ENCODE measurements at regions of chr1 and their contacts with region 1.

Region 1: GRCh38 chr1:93629099-93630059 is 52.3 kb downstream of the BCAR3 start:
- DNase-seq: peak; percentile 59
- H3K4me3 ChIP-seq: no peak overlapping the region
- H3K27ac ChIP-seq: peak overlapping the region; percentile 35
- H3K4me1 ChIP-seq: peaks cover 65% of the 10 kb centered on the region
- H3K27me3 ChIP-seq: no peaks in the 10 kb centered on the region
- CTCF ChIP-seq: peak; percentile 74 to 78

Region 2: GRCh38 chr1:93585059-93585966 is 44.1 kb before region 1 on chr1:
- CTCF ChIA-PET with region 1: interaction called, 3 read pairs
- dilution Hi-C with region 1: loop called (anchors 5 kb)
- in situ Hi-C with region 1: no loop called
- intact Hi-C with region 1: loop called (anchors 2 kb)
- DNase-seq: peak; percentile 82
- H3K4me3 ChIP-seq: no peak overlapping the region
- H3K27ac ChIP-seq: peak overlapping the region; percentile 64
- H3K4me1 ChIP-seq: peaks cover 61% of the 10 kb centered on the region
- H3K27me3 ChIP-seq: no peaks in the 10 kb centered on the region
- CTCF ChIP-seq: no peak

Region 3: GRCh38 chr1:93827633-93828366 is 198.4 kb after region 1 on chr1:
- CTCF ChIA-PET with region 1: no interaction called
- dilution Hi-C with region 1: no loop called
- in situ Hi-C with region 1: loop called in 1 of 2 experiments (anchors 10 kb)
- intact Hi-C with region 1: no loop called
- DNase-seq: no peak
- H3K4me3 ChIP-seq: no peak overlapping the region
- H3K27ac ChIP-seq: no peak overlapping the region
- H3K4me1 ChIP-seq: peaks cover 28% of the 10 kb centered on the region
- H3K27me3 ChIP-seq: no peaks in the 10 kb centered on the region
- CTCF ChIP-seq: no peak

Measured in mammary epithelial cell (primary cell).